GM10248 (cell line): ENCODE measurements at regions of chr9 and their contacts with region 1.

Region 1: DNA sequence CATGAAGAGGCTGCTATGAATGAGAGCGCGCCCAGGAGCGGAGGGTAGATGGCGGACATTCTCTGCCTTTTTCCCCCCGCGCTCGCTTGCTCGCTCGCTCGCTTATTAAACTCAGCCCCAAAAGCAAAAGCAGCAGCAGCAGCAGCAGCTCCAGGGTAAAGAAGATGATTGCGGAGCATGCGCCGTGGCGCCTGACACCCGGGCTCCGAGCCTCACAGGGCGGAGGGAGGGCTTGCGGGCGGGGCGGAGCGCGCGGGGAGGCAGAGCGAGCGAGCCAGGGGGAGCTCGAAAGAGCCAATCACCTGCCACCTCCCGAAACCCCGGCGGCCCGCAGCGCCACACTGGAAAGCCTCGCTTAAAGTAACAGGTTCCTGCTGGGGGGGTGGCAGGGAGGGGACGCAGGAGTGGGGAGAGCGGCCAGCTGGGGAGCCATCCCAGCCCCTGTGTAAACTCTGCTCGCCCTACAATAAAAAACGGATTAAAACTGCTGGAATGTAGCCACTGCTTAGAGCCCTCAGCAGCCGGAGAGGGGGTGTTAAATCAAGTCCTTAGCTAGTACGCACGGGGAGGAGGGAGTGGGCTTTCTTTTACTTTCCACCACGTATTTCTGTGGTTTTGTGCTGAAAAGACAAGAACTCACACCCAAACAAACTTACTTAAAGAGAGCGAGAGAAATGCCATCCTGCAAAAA is at the start of gene MLLT3:
- DNase-seq: peak; percentile 95
- CTCF ChIP-seq: no peak

Region 2: GRCh38 chr9:20363233-20363632 is 259.2 kb before region 1 on chr9:
- CTCF ChIA-PET with region 1: no interaction called
- POLR2A ChIA-PET with region 1: no interaction called
- DNase-seq: no peak
- CTCF ChIP-seq: no peak

Region 3: DNA sequence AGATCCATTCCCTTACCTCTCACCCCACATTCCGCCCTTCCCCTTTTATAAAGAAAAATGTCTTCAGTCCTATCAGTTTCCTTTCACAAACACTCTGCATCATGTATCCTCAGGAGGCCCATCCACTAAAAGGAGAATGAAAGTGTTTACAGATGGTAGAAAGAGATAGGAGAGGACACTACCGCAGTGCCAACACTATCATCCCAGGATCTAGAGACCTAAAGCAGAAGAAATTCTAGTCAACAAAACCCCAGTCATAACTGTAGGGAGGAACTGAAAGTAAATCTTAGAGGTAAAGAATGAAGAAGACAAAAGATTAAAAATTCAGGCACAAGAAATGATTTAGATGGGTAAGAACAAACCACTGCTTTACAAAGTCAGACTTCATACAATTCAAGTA is 114.2 kb before region 1 on chr9:
- CTCF ChIA-PET with region 1: no interaction called
- POLR2A ChIA-PET with region 1: no interaction called
- DNase-seq: peak; percentile 45
- CTCF ChIP-seq: no peak

Region 4: GRCh38 chr9:20604562-20604961 is 17.9 kb before region 1 on chr9:
- CTCF ChIA-PET with region 1: interaction called, 13 read pairs
- POLR2A ChIA-PET with region 1: interaction called, 6 read pairs
- DNase-seq: peak; percentile 20
- CTCF ChIP-seq: no peak

Region 5: GRCh38 chr9:20640331-20641187 is 18.1 kb after region 1 on chr9:
- CTCF ChIA-PET with region 1: interaction called, 60 read pairs
- POLR2A ChIA-PET with region 1: no interaction called
- DNase-seq: peak; percentile 40
- CTCF ChIP-seq: no peak

Region 6: DNA sequence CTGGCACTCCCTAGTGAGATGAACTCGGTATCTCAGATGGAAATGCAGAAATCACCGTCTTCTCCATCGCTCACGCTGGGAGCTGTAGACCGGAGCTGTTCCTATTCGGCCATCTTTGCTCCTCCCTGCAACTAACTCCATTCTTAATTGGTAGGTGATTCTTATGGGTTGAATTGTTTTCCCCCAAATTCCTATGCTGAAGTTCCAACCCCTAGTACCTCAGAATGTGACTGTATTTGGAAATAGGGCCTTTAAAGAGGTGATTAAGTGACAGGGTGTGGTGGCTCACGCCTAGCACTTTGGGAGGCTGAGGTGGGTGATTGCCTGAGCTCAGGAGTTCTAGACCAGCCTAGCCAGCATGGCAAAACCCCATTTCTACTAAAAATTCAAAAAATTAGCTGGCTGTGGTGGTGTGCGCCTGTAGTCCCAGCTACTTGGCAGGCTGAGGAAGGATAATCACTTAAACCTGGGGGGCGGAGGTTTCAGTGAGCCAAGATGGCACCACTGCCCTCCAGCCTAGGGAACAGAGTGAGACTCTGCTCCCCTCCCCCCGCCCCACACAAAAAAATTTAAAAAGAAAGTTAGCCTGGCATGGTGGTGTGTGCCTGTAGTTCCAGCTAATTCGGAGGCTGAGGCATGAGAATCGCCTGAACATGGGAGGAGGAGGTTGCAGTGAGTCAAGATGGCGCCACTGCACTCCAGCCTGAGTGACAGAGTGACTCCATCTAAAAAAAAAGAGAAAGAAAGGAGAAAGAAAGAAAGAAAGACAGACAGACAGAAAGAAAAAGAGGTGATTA is 36.4 kb after region 1 on chr9:
- CTCF ChIA-PET with region 1: interaction called, 10 read pairs
- POLR2A ChIA-PET with region 1: no interaction called
- DNase-seq: no peak
- CTCF ChIP-seq: no peak

Region 7: GRCh38 chr9:20929276-20929675 is 306.8 kb after region 1 on chr9:
- CTCF ChIA-PET with region 1: interaction called, 13 read pairs
- POLR2A ChIA-PET with region 1: no interaction called
- DNase-seq: no peak
- CTCF ChIP-seq: no peak

Region 8: GRCh38 chr9:21104787-21105186 is 482.3 kb after region 1 on chr9:
- CTCF ChIA-PET with region 1: interaction called, 29 read pairs
- POLR2A ChIA-PET with region 1: no interaction called
- DNase-seq: no peak
- CTCF ChIP-seq: no peak